A673 (cell line): ENCODE measurements at regions of chr9 and their contacts with region 1.

Region 1: DNA sequence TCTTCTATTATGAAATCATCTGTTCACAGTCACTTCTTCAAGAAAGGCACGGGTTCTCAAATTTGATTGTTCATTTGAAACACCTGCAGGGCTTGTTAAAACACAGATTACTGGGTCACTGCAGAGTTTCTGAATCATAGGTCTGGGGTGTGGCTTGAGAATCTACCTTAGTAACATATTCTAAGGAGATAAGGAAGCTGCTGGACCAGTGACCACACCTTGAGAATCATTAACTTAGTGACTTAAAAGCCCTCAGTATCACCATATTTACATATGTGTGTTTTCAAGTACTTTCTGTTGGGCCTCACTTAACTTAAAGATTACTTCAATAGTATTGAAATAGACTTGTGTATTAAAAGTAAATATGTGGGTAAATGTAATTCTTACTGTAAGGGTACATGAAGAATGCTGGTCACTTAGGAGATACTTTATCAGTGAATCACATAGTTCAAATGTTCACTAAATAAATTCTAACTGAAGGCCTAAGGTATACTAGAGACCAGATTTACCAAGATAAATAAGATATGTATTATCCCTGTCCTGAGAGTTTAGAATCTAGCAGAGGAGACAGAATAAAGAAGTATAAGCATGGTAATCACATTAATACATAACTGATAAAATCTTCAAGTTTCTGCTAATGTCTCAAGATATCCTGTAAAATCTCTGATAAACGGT is 1342.1 kb upstream of the C9orf72 start:
- DNase-seq: no peak
- H3K4me3 ChIP-seq: no peak overlapping the region
- H3K27ac ChIP-seq: no peak overlapping the region
- H3K4me1 ChIP-seq: no peaks in the 10 kb centered on the region
- H3K27me3 ChIP-seq: no peaks in the 10 kb centered on the region
- CTCF ChIP-seq: no peak

Region 2: DNA sequence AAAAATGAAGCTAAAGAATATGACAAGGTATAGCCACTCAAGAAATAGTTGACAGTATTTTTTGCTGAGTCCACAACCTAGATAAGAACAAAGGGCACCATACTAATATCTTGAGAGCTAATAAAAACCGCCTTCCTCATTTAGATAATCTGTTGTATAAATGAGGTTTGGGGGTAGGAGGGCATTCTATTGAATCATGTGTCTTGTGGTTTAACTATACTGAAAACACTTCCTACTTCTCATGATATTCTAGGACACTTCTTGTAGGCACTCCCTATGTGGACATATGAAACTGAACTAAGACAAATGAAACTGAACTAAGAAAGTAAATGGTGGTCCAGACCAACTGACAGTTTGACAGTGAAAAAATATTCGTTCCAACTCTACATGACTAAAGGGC is 73.6 kb before region 1 on chr9:
- CTCF ChIA-PET with region 1: no interaction called
- POLR2A ChIA-PET with region 1: no interaction called
- intact Hi-C with region 1: no loop called
- DNase-seq: no peak
- H3K4me3 ChIP-seq: no peak overlapping the region
- H3K27ac ChIP-seq: no peak overlapping the region
- H3K4me1 ChIP-seq: peaks cover 14% of the 10 kb centered on the region
- H3K27me3 ChIP-seq: no peaks in the 10 kb centered on the region
- CTCF ChIP-seq: no peak

Region 3: DNA sequence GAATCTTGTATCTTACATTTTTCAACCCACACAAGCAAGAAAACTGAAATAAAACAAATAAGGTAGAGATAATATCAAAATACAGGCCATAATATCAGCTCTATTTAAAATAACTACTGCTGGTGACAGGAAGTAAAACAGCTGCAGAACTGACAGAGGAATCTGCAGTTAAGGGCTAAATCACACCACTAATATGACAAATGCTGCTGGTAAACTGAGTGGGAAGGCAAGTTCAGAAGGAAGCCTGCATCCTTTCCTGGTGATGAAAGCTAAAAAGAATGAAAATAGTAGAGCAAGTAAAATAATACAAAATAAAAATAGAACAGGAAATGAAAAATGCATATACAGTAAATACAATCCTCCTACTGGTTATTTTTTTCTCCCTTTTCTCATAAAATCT is 48.4 kb before region 1 on chr9:
- CTCF ChIA-PET with region 1: no interaction called
- POLR2A ChIA-PET with region 1: no interaction called
- intact Hi-C with region 1: loop called (anchors 5 kb)
- DNase-seq: peak; percentile 64
- H3K4me3 ChIP-seq: no peak overlapping the region
- H3K27ac ChIP-seq: peak overlapping the region; percentile 55
- H3K4me1 ChIP-seq: peaks cover 45% of the 10 kb centered on the region
- H3K27me3 ChIP-seq: no peaks in the 10 kb centered on the region
- CTCF ChIP-seq: no peak